AG04450 (cell line): ENCODE measurements at regions of chr1 and their contacts with region 1.

Region 1: GRCh38 chr1:206865013-206865671 is at the start of gene IL20:
- DNase-seq: peak; percentile 50
- H3K4me3 ChIP-seq: no peak within 1 kb of the TSS
- H3K27ac ChIP-seq: no peak within 1 kb of the TSS
- H3K27me3 ChIP-seq: no peaks in the 10 kb centered on the region
- CTCF ChIP-seq: peak; percentile 90
- polyA plus RNA-seq, gene IL20: not detected in 2 replicates

Region 2: DNA sequence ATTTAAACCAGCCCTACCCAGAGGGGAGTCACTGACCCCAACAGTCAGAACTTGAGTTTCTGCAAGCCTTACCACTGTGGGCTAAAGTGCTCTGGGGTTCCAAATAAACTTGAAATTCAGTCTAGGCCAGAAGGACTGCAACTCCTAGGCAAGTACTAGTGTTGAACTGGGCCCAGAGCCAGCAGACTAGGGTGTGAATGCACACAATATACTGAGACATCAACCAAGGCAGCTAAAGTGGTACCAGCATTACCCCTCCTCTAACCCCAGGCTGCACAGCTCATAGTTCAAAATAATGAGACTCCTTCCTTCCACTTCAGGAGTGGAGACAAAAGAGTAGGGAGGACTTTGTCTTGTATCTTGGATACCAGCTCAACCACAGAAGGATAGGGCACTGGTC is 18.7 kb before region 1 on chr1:
- CTCF ChIA-PET with region 1: interaction called, 15 read pairs
- POLR2A ChIA-PET with region 1: no interaction called
- DNase-seq: no peak
- H3K4me3 ChIP-seq: no peak overlapping the region
- H3K27ac ChIP-seq: no peak overlapping the region
- H3K27me3 ChIP-seq: no peaks in the 10 kb centered on the region
- CTCF ChIP-seq: no peak

Region 3: DNA sequence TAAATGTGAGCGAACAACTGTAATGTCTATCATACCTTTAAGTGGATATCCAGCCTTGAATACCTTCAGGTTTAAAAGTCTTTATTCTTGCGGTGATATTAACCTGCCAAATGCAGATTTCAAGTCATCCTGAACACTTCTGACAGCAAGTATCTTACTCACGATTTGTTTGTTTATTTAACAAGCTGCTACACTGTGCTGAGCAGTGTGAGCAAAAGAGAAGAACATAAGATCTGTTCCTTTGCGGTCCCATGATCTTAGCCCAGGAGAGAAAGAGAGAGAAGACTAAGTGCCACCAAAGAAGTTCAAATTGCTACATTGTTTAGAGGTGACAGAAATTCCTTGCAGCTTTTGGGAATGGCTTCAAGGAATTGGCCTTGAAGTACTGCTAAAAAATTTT is 22.6 kb after region 1 on chr1:
- CTCF ChIA-PET with region 1: interaction called, 30 read pairs
- POLR2A ChIA-PET with region 1: no interaction called
- DNase-seq: no peak
- H3K4me3 ChIP-seq: no peak overlapping the region
- H3K27ac ChIP-seq: no peak overlapping the region
- H3K27me3 ChIP-seq: no peaks in the 10 kb centered on the region
- CTCF ChIP-seq: no peak

Region 4: GRCh38 chr1:206895830-206896242 is 30.7 kb after region 1 on chr1:
- CTCF ChIA-PET with region 1: interaction called, 12 read pairs
- POLR2A ChIA-PET with region 1: no interaction called
- DNase-seq: no peak
- H3K4me3 ChIP-seq: no peak overlapping the region
- H3K27ac ChIP-seq: peak overlapping the region; percentile 23
- H3K27me3 ChIP-seq: no peaks in the 10 kb centered on the region
- CTCF ChIP-seq: no peak

Region 5: GRCh38 chr1:207115269-207115668 is 250.1 kb after region 1 on chr1:
- CTCF ChIA-PET with region 1: no interaction called
- POLR2A ChIA-PET with region 1: no interaction called
- DNase-seq: no peak
- H3K4me3 ChIP-seq: no peak overlapping the region
- H3K27ac ChIP-seq: no peak overlapping the region
- H3K27me3 ChIP-seq: no peaks in the 10 kb centered on the region
- CTCF ChIP-seq: no peak